Activated CD4-positive, alpha-beta T cell treated with anti-CD3 and anti-CD28 coated beads for 36 hours (primary cell): ENCODE measurements at regions of chr2 and their contacts with region 1.

Region 1: GRCh38 chr2:62456721-62457539 is 49.1 kb downstream of the TMEM17 start:
- DNase-seq: peak; percentile 82
- ATAC-seq: peak; percentile 90
- H3K4me3 Mint-ChIP-seq: no peak overlapping the region
- H3K27ac Mint-ChIP-seq: no peak overlapping the region
- H3K4me1 Mint-ChIP-seq: peaks cover 2% of the 10 kb centered on the region
- H3K27me3 Mint-ChIP-seq: peaks cover 4% of the 10 kb centered on the region

Region 2: GRCh38 chr2:62524293-62524941 is 67.5 kb after region 1 on chr2:
- CTCF ChIA-PET with region 1: no interaction called
- POLR2A ChIA-PET with region 1: no interaction called
- intact Hi-C with region 1: no loop called
- DNase-seq: no peak
- ATAC-seq: no peak
- H3K4me3 Mint-ChIP-seq: no peak overlapping the region
- H3K27ac Mint-ChIP-seq: no peak overlapping the region
- H3K4me1 Mint-ChIP-seq: no peaks in the 10 kb centered on the region
- H3K27me3 Mint-ChIP-seq: peaks cover 6% of the 10 kb centered on the region

Region 3: DNA sequence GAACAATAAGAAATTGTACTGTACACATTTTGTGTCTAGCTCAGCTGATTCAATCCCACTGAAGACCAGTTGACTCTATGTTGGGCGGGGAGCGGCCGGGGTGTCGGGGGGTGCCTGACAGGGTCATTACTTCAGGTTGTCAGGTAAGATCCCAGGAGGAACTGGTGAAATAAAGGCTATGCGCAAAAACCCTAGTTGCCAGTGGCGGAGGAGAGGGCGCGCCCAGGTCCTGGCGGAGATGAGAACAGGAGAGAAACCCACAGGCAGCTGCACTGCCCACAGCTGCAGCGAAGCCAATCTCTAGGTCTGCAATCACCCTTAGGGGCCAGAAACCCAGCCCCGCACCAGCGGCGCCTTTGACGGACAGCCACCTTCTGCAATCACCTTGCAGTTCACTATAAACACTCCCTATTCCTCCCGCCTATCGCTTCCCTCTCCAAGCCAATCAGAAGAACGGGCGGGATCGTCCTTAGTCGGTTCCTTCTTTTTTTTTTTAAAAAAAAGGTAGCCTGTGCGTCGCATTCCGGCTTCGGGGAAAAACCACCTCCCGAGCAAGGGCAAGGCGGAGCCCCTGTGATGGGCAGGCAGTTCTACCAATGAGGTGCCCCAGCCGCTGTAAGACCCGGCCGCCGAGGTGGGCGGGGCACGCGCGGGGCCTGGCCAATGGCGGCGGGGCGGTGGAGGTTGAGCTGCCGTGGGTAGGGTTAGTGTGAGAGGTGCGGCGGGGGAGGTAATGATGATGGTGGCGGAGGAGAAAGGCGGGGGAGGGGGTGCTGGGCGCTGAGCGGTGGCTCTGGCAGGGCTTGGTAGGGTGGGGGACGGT is 248.3 kb after region 1 on chr2 and contains the start of gene EHBP1:
- CTCF ChIA-PET with region 1: no interaction called
- POLR2A ChIA-PET with region 1: interaction called, 3 read pairs
- intact Hi-C with region 1: loop called in 1 of 2 experiments (anchors 5 kb)
- DNase-seq: peak; percentile 99
- ATAC-seq: peak; percentile 95
- H3K4me3 Mint-ChIP-seq: peak within 1 kb of the TSS; percentile 79
- H3K27ac Mint-ChIP-seq: peak within 1 kb of the TSS; percentile 83
- H3K4me1 Mint-ChIP-seq: peaks cover 31% of the 10 kb centered on the region
- H3K27me3 Mint-ChIP-seq: no peaks in the 10 kb centered on the region
- total RNA-seq, gene EHBP1: 27.3 to 28.5 TPM

Region 4: DNA sequence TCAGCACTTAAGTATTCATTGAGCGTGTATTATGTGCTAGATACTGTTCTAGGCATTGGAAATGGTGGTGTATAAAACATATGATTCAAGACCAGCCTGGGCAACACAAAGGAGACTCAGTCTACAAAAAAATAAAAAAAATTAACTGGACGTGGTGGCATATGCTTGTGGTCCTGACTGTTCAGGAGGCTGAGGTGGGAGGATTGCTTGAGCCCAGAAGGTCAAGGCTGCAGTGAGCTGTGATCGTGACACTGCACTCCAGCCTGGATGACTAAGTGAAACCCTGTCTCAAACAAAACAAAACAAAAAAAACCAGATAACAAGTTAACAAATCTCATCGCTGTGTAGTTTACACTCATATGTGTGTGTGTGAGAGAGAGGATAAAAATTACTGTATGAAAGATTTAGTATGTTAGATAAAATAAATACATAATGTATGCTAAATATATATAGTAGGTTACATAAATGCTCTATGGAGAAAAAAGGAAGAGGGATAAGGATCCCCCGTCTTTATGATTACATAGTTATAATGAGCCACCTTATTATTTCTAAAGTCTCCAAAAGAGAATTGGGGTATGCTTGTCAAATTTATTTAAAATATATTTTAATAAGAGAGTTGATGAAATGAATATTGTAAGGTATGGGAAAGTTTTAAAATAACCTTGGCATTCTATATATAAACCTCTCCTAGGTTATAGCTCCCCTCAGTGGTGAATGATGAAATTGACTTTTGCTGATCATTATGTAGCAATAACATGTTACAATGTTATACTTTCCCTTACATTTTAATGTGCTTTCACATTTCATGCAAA is 317.8 kb after region 1 on chr2:
- CTCF ChIA-PET with region 1: interaction called, 69 read pairs
- POLR2A ChIA-PET with region 1: no interaction called
- intact Hi-C with region 1: loop called (anchors 1 kb)
- DNase-seq: no peak
- ATAC-seq: no peak
- H3K4me3 Mint-ChIP-seq: no peak overlapping the region
- H3K27ac Mint-ChIP-seq: no peak overlapping the region
- H3K4me1 Mint-ChIP-seq: no peaks in the 10 kb centered on the region
- H3K27me3 Mint-ChIP-seq: no peaks in the 10 kb centered on the region

Region 5: DNA sequence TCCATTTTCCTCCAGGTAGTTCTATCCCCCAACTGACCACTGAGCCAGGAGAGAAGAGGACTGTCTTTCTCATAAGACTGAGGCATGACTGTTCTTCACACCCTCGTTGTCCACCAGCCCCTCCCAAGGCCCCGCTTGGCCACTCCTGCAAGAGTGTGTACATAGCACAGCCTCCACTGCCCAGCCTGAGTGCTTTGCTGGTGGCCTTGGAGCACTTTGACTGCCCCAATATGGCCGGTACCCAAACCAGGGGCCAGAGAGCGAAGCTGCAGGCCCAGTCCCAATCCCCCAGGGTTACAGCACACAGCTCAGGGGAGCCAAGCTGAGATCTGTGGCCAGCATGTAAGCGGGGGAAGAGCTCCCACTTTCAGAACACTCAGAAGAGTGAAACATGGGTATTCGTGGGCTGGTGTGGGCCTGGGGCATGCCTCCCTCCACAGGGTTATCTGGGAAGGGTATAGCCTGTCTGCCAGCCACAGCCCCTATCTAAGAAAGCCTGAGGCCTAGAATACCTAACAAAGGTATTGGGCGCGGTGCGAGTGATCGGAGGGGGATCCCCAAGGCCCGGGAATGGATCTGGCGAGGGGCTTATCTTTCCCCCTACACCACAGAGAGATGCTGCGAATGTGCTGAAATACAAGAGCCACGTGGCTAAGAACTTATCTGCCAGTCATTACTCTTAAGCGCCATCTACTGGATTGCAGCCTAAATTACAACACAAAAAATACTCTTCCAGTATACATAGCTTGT is 967.6 kb after region 1 on chr2:
- CTCF ChIA-PET with region 1: interaction called, 5 read pairs
- POLR2A ChIA-PET with region 1: no interaction called
- intact Hi-C with region 1: loop called in 1 of 2 experiments (anchors 2 kb)
- DNase-seq: peak; percentile 16
- ATAC-seq: peak; percentile 76
- H3K4me3 Mint-ChIP-seq: no peak overlapping the region
- H3K27ac Mint-ChIP-seq: no peak overlapping the region
- H3K4me1 Mint-ChIP-seq: peaks cover 3% of the 10 kb centered on the region
- H3K27me3 Mint-ChIP-seq: no peaks in the 10 kb centered on the region

Region 6: GRCh38 chr2:63544017-63544627 is 1087.2 kb after region 1 on chr2:
- CTCF ChIA-PET with region 1: no interaction called
- POLR2A ChIA-PET with region 1: no interaction called
- intact Hi-C with region 1: loop called (anchors 1 to 10 kb)
- DNase-seq: no peak
- ATAC-seq: no peak
- H3K4me3 Mint-ChIP-seq: no peak overlapping the region
- H3K27ac Mint-ChIP-seq: no peak overlapping the region
- H3K4me1 Mint-ChIP-seq: no peaks in the 10 kb centered on the region
- H3K27me3 Mint-ChIP-seq: no peaks in the 10 kb centered on the region